Activated CD4-positive, alpha-beta T cell treated with anti-CD3 and anti-CD28 coated beads for 36 hours (primary cell): ENCODE measurements at regions of chr4 and their contacts with region 1.

Region 1: GRCh38 chr4:42673082-42673425 is 16.1 kb upstream of the ATP8A1 start:
- DNase-seq: peak; percentile 53
- ATAC-seq: peak; percentile 65
- H3K4me3 Mint-ChIP-seq: peak overlapping the region; percentile 10
- H3K27ac Mint-ChIP-seq: peak overlapping the region; percentile 90
- H3K4me1 Mint-ChIP-seq: peaks cover 44% of the 10 kb centered on the region
- H3K27me3 Mint-ChIP-seq: no peaks in the 10 kb centered on the region

Region 2: GRCh38 chr4:42627885-42628646 is 45.0 kb before region 1 on chr4:
- CTCF ChIA-PET with region 1: no interaction called
- POLR2A ChIA-PET with region 1: interaction called, 3 read pairs
- intact Hi-C with region 1: loop called in 1 of 2 experiments (anchors 5 kb)
- DNase-seq: peak; percentile 62
- ATAC-seq: peak; percentile 93
- H3K4me3 Mint-ChIP-seq: peak overlapping the region; percentile 22
- H3K27ac Mint-ChIP-seq: peak overlapping the region; percentile 84
- H3K4me1 Mint-ChIP-seq: peaks cover 57% of the 10 kb centered on the region
- H3K27me3 Mint-ChIP-seq: no peaks in the 10 kb centered on the region

Region 3: GRCh38 chr4:43331226-43332051 is 658.4 kb after region 1 on chr4:
- CTCF ChIA-PET with region 1: no interaction called
- POLR2A ChIA-PET with region 1: no interaction called
- intact Hi-C with region 1: no loop called
- DNase-seq: no peak
- ATAC-seq: no peak
- H3K4me3 Mint-ChIP-seq: no peak overlapping the region
- H3K27ac Mint-ChIP-seq: no peak overlapping the region
- H3K4me1 Mint-ChIP-seq: no peaks in the 10 kb centered on the region
- H3K27me3 Mint-ChIP-seq: no peaks in the 10 kb centered on the region